Activated CD8-positive, alpha-beta memory T cell treated with anti-CD3 and anti-CD28 coated beads, Interleukin-2, amount 10 ng/mL, durations not matched to agents 7 days and 5 days (primary cell): ENCODE measurements at regions of chr19 and their contacts with region 1.

Region 1: GRCh38 chr19:42199440-42200115 is 17.9 kb downstream of the DEDD2 start:
- DNase-seq: peak; percentile 94
- ATAC-seq: peak; percentile 70
- H3K4me3 Mint-ChIP-seq: peak overlapping the region; percentile 69
- H3K27ac Mint-ChIP-seq: peak overlapping the region; percentile 96
- H3K4me1 Mint-ChIP-seq: peaks cover 76% of the 10 kb centered on the region
- H3K27me3 Mint-ChIP-seq: no peaks in the 10 kb centered on the region

Region 2: GRCh38 chr19:42176990-42177685 is 22.4 kb before region 1 on chr19:
- CTCF ChIA-PET with region 1: interaction called, 24 read pairs
- DNase-seq: peak; percentile 80
- ATAC-seq: peak; percentile 94
- H3K4me3 Mint-ChIP-seq: no peak overlapping the region
- H3K27ac Mint-ChIP-seq: no peak overlapping the region
- H3K4me1 Mint-ChIP-seq: peaks cover 9% of the 10 kb centered on the region
- H3K27me3 Mint-ChIP-seq: peaks cover 31% of the 10 kb centered on the region

Region 3: DNA sequence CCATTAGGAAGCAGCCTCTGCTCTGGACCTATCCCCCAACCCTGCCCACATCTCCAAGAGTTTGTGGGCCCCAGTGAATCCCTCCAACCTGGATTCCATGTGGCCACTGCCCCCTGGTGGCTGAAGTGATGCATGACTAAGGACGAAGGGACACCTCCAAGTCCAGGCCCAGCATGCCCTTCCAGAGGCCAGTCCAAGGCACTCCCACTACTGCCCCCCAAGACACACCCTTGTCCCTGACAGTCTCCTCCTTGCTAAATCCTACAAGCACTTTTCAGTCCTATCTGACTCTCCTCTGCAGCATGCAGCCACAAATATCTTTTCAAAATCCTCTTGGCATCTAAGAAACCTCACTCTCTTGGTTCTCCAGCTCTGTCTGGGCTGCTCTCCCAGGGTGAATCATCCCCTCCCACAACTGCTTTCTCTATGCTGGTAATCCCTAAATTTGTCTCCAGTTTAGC is 15.1 kb before region 1 on chr19:
- CTCF ChIA-PET with region 1: interaction called, 75 read pairs
- DNase-seq: peak; percentile 81
- ATAC-seq: peak; percentile 78
- H3K4me3 Mint-ChIP-seq: peak overlapping the region; percentile 5
- H3K27ac Mint-ChIP-seq: peak overlapping the region; percentile 87
- H3K4me1 Mint-ChIP-seq: peaks cover 39% of the 10 kb centered on the region
- H3K27me3 Mint-ChIP-seq: peaks cover 8% of the 10 kb centered on the region

Region 4: DNA sequence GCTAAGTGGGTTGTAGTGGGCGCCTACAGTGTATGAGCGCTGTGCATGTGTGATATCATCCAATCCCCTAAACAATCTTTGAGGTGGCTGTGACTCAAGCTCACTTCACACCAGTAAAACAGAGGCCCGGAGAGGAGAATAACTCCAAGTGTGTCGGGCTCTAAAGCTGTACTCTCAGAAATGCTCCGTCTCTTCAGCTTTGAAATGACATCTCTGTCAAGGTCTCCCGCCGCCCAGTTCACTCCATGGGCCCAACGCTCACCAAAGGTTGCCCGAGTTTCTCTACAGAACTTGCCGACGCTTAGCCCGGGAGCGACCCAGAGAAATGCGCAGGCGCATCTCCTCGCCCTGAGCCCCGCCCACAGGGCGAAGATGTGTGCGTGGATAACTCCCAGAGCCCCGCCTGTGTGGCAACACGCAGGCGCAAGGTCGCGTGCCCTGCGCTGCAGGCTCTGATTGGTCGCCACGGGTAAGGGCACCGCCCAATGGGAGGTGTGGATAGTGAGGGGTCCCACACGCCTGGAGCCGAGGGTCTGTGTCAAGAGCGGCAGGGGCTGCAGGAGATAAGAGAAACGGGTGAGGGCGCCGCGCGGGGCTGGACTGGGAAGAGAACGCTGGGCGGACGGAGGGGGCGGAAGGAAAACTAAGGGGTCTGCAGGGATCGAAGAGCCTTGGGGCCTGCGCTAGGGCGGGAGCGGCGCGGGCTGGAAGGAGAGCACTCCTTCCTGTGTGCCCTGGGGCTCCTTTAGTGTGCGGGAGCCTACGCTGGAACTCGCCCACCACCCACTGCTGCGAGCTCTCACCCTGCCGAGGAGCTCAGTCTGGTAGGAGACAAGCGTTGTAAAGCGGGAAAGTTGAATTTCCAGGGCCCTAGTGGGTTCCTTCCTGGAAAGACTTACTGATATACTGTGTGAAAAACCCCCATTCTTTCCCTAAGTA is 20.5 kb after region 1 on chr19 and contains the start of gene ZNF526:
- CTCF ChIA-PET with region 1: interaction called, 39 read pairs
- DNase-seq: peak; percentile 99
- ATAC-seq: peak; percentile 87
- H3K4me3 Mint-ChIP-seq: peak within 1 kb of the TSS; percentile 98
- H3K27ac Mint-ChIP-seq: peak within 1 kb of the TSS; percentile 94
- H3K4me1 Mint-ChIP-seq: peaks cover 65% of the 10 kb centered on the region
- H3K27me3 Mint-ChIP-seq: no peaks in the 10 kb centered on the region
- total RNA-seq, gene ZNF526: 21.9 to 24.4 TPM